CD4-positive, alpha-beta memory T cell (primary cell): ENCODE measurements at regions of chrX and their contacts with region 1.

Region 1: GRCh38 chrX:30593435-30594200 is 16.1 kb upstream of the TASL start:
- DNase-seq: peak in 4 of 5 donors; percentile 10 to 34 (median 20)
- H3K4me3 ChIP-seq: no peak overlapping the region
- H3K4me3 Mint-ChIP-seq: no peak overlapping the region
- H3K27ac ChIP-seq: no peak overlapping the region
- H3K27ac Mint-ChIP-seq: peak overlapping the region in 1 of 7 donors; percentile 13
- H3K4me1 ChIP-seq: no peaks in the 10 kb centered on the region
- H3K4me1 Mint-ChIP-seq: peaks cover 3 to 8% (median 4%) of the 10 kb centered on the region in 4 donors
- H3K27me3 ChIP-seq: no peaks in the 10 kb centered on the region
- H3K27me3 Mint-ChIP-seq: no peaks in the 10 kb centered on the region

Region 2: DNA sequence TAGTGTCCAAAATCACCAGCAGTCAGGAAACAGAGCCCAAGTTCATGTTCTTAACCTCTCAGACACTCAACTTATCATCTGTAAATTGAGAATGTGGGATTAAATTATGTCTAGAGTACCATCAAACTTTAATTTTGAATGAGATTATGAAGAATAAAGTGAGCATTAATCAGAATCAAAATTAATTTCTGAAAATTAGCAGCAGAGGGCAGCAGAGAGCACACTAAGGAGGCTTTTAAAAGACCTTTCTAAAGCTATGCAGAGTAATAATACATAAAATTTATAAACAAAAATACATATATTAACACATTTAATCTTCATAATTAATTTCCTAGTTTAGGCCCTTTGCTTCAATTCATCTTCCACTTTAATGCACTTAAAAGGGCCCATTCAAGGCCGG is 23.1 kb before region 1 on chrX:
- CTCF ChIA-PET with region 1: interaction called, 42 read pairs
- POLR2A ChIA-PET with region 1: no interaction called
- intact Hi-C with region 1: loop called (anchors 1 kb)
- DNase-seq: peak in 4 of 5 donors; percentile 11 to 27 (median 24)
- H3K4me3 ChIP-seq: no peak overlapping the region
- H3K4me3 Mint-ChIP-seq: no peak overlapping the region
- H3K27ac ChIP-seq: no peak overlapping the region
- H3K27ac Mint-ChIP-seq: no peak overlapping the region
- H3K4me1 ChIP-seq: no peaks in the 10 kb centered on the region
- H3K4me1 Mint-ChIP-seq: peaks cover 7 to 15% (median 9%) of the 10 kb centered on the region in 4 donors
- H3K27me3 ChIP-seq: no peaks in the 10 kb centered on the region
- H3K27me3 Mint-ChIP-seq: no peaks in the 10 kb centered on the region